IMR-90 (cell line): ENCODE measurements at regions of chr6 and their contacts with region 1.

Region 1: DNA sequence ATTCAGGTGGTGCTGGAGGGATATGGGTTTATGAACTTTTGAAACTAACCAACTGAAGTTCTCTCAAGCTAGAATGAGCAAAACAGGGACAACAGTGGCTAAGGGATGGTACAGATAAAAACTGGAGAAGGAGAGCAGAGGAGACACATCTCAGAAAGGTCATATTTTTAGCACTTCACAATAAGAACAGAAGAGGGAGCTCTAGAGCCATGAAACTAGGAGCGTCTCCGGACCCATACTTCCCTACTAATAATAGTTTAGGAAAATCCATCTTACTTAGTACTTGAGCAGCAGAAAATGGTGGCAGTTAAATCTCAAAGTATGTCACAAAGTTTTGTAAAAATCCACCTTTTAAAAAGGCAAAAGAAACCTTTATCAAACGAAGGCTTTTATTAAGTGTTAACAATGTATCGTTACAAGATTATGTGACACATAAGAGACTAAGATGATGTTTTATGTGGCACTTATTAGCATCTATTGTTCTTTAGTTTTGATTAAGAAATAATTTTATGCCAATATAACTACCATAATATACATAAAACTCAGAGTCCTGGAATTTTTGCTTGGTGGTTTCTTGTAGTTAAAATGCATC is 278.6 kb downstream of the TBC1D32 start:
- DNase-seq: peak; percentile 52
- ATAC-seq: peak; percentile 95
- H3K4me3 ChIP-seq: no peak overlapping the region
- H3K27ac ChIP-seq: no peak overlapping the region
- H3K4me1 ChIP-seq: no peaks in the 10 kb centered on the region
- H3K27me3 ChIP-seq: no peaks in the 10 kb centered on the region
- CTCF ChIP-seq: peak; percentile 85
- POLR2A ChIP-seq: no peak
- RAD21 ChIP-seq: peak; percentile 84

Region 2: DNA sequence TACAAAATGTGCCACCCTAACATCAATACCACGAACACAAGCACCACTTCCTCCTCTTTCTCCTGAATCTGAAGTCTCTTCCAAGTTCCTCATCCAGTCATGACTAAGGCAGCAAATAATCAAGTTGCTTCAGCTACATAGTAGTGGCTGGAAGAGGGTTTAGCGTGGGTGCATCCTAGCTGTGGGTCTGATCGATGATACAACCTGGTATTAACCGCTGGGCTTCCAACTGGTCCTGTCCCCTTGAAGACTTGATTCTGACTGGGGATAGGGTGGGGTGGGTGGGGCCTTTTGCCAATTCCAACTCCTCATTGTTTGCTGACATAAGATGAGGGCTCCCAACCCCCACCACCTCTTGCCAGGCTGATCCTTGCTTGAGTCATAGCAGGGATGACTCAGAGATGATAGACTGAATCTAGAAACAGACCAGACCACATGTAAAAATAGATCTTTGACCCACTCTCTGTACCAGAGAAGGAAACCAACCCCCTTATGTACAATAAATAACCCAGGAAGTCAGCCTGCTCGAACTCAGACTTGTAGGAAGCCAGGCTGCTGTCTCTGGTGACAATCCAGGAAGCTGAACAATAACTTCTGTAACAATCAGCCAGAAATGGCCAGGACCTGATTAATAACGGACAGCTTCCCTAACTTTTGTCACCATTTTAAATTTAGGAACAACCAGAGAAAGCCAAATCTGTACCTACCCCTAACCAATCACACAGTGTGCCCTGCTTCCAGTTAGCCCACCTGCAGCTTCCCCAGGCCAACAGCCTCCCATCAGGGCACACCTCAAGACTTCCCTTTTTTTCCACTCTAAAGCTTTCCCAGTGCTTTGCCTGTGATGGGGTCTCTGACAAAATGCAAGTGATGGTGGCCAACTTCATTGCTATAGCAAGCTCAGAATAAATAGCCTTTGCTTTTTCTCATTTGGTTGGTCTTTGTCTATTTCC is 1908.3 kb before region 1 on chr6:
- CTCF ChIA-PET with region 1: no interaction called
- POLR2A ChIA-PET with region 1: no interaction called
- dilution Hi-C with region 1: no loop called
- in situ Hi-C with region 1: no loop called
- intact Hi-C with region 1: loop called (anchors 2 kb)
- DNase-seq: peak; percentile 98
- ATAC-seq: peak; percentile 88
- H3K4me3 ChIP-seq: no peak overlapping the region; the same call in 1 of the 2 replicates
- H3K27ac ChIP-seq: peak overlapping the region; percentile 55; the same call in 1 of the 2 replicates
- H3K4me1 ChIP-seq: peaks cover 16% of the 10 kb centered on the region
- H3K27me3 ChIP-seq: no peaks in the 10 kb centered on the region
- CTCF ChIP-seq: no peak
- POLR2A ChIP-seq: no peak
- RAD21 ChIP-seq: no peak

Region 3: GRCh38 chr6:121222656-121223055 is 167.0 kb after region 1 on chr6:
- CTCF ChIA-PET with region 1: no interaction called
- POLR2A ChIA-PET with region 1: no interaction called
- dilution Hi-C with region 1: no loop called
- in situ Hi-C with region 1: loop called (anchors 10 kb)
- intact Hi-C with region 1: loop called (anchors 1 kb)
- DNase-seq: peak; percentile 79
- ATAC-seq: peak; percentile 83
- H3K4me3 ChIP-seq: no peak overlapping the region
- H3K27ac ChIP-seq: no peak overlapping the region
- H3K4me1 ChIP-seq: no peaks in the 10 kb centered on the region
- H3K27me3 ChIP-seq: no peaks in the 10 kb centered on the region
- CTCF ChIP-seq: peak; percentile 50
- POLR2A ChIP-seq: no peak
- RAD21 ChIP-seq: peak; percentile 37

Region 4: DNA sequence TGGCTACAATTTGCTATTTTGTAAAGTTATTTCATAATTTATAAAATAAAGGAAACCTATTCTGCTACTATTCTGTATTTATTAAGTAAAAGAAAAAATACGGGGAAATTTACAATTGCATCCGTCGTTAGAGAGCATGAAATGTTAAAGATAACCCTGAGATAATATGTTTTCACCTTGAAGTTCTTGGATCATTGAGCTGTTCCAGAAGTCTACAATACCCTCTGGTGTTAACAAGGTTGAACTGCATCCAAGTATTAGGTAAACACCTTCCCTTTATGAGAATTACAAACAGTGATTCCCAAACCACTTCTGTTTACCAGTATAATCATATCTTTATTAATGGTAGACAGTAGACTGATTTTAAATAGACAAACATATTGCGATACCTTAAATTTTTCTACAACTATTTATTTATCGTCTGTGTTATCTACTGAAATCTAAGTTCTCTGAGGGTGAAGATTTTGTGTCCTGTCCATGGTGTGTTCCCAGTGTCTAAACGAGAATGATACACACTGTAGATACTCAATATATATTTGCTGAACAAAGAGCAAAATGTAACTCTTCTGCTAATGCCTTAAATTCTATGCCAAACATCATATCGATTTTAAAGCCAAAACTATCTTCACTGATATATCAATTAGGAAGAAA is 250.4 kb after region 1 on chr6:
- CTCF ChIA-PET with region 1: interaction called, 4 read pairs
- POLR2A ChIA-PET with region 1: no interaction called
- dilution Hi-C with region 1: no loop called
- in situ Hi-C with region 1: no loop called
- intact Hi-C with region 1: loop called (anchors 1 kb)
- DNase-seq: peak; percentile 25
- ATAC-seq: no peak
- H3K4me3 ChIP-seq: no peak overlapping the region
- H3K27ac ChIP-seq: no peak overlapping the region
- H3K4me1 ChIP-seq: peaks cover 6% of the 10 kb centered on the region
- H3K27me3 ChIP-seq: no peaks in the 10 kb centered on the region
- CTCF ChIP-seq: peak; percentile 51
- POLR2A ChIP-seq: no peak
- RAD21 ChIP-seq: peak; percentile 54

Region 5: DNA sequence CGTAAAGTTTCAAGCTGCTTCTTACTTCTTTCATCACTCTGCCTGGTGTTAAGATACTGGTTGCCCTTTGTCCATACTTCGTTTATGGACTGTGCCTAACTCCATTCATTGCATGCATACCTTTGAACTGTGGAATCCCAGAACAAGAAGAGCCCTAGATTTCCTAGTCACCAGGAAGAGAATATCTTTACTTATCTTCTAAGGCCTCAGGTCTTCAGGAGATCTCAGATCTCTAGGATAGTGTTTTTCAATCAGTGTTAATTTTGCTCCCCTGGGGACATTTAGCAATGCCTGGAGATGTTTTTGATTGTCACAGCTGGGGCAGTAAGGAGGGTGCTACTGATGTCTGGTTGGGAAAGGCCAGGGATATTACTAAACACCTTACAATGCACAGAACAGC is 344.3 kb after region 1 on chr6:
- CTCF ChIA-PET with region 1: interaction called, 5 read pairs
- POLR2A ChIA-PET with region 1: no interaction called
- dilution Hi-C with region 1: no loop called
- in situ Hi-C with region 1: loop called (anchors 10 kb)
- intact Hi-C with region 1: loop called (anchors 1 kb)
- DNase-seq: no peak
- ATAC-seq: no peak
- H3K4me3 ChIP-seq: no peak overlapping the region
- H3K27ac ChIP-seq: no peak overlapping the region
- H3K4me1 ChIP-seq: no peaks in the 10 kb centered on the region
- H3K27me3 ChIP-seq: no peaks in the 10 kb centered on the region; the same call in 1 of the 2 replicates
- CTCF ChIP-seq: no peak
- POLR2A ChIP-seq: no peak
- RAD21 ChIP-seq: no peak

Region 6: GRCh38 chr6:121977556-121977955 is 921.9 kb after region 1 on chr6:
- CTCF ChIA-PET with region 1: no interaction called
- POLR2A ChIA-PET with region 1: no interaction called
- dilution Hi-C with region 1: no loop called
- in situ Hi-C with region 1: no loop called
- intact Hi-C with region 1: loop called (anchors 5 kb)
- DNase-seq: no peak
- ATAC-seq: no peak
- H3K4me3 ChIP-seq: no peak overlapping the region
- H3K27ac ChIP-seq: no peak overlapping the region
- H3K4me1 ChIP-seq: no peaks in the 10 kb centered on the region
- H3K27me3 ChIP-seq: no peaks in the 10 kb centered on the region
- CTCF ChIP-seq: no peak
- POLR2A ChIP-seq: no peak
- RAD21 ChIP-seq: no peak

Region 7: GRCh38 chr6:122184401-122184827 is 1128.7 kb after region 1 on chr6:
- CTCF ChIA-PET with region 1: no interaction called
- POLR2A ChIA-PET with region 1: no interaction called
- dilution Hi-C with region 1: no loop called
- in situ Hi-C with region 1: loop called (anchors 25 kb)
- intact Hi-C with region 1: loop called (anchors 1 kb)
- DNase-seq: peak; percentile 47
- ATAC-seq: peak; percentile 84
- H3K4me3 ChIP-seq: peak overlapping the region; percentile 3; the same call in 1 of the 2 replicates
- H3K27ac ChIP-seq: no peak overlapping the region
- H3K4me1 ChIP-seq: no peaks in the 10 kb centered on the region
- H3K27me3 ChIP-seq: no peaks in the 10 kb centered on the region
- CTCF ChIP-seq: peak; percentile 64
- POLR2A ChIP-seq: no peak
- RAD21 ChIP-seq: peak; percentile 79